A673 (cell line): ENCODE measurements at regions of chr7 and their contacts with region 1.

Region 1: DNA sequence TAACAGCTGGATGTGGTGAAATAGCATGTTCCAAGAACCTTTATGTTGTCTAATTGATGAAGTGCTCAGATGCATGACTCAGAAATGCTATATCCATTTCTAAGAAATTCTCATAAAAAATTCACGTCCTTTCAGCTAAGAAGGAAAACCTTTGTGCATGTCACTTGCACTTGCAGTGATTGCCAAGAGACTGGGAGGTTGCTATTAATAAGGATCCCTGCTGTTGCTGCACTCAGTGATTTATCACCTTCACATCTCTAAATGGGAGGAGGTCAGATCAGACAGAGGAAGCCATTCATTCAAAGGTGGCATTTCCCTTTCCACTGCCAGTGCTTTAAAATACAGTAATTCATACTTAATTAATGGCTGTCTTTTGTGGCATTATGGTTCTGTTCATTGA is 89.5 kb downstream of the THSD7A start:
- DNase-seq: peak; percentile 90
- H3K4me3 ChIP-seq: no peak overlapping the region
- H3K27ac ChIP-seq: no peak overlapping the region
- H3K4me1 ChIP-seq: peaks cover 14% of the 10 kb centered on the region
- H3K27me3 ChIP-seq: no peaks in the 10 kb centered on the region
- CTCF ChIP-seq: no peak

Region 2: DNA sequence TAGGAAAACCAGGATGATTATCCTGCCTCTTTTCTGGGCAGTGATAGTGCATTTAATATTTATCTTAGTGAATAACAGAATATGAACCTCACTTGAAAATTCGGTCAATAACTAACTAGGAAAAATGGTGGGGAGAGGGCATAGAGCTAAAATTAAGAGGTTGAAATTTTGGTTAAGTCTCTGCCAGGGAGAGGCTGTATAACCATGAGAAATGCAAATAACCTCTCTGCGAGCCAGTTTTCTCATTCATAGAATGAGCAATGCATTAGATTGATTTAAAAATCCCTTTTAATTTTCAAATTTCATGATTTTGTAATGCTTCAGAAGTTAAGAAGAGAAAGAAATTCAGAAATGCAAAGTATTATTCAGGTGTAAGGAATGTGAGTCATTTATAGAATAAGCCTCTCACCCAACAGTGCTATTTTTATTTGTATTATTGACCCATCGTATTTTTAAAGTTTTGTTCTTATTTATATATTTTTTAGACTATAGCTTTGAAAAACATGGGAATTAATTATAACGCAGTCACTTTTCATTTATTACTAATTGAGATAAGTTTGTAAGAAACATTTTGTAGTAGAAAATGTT is 664.2 kb before region 1 on chr7:
- CTCF ChIA-PET with region 1: no interaction called
- POLR2A ChIA-PET with region 1: no interaction called
- intact Hi-C with region 1: no loop called
- DNase-seq: no peak
- H3K4me3 ChIP-seq: no peak overlapping the region
- H3K27ac ChIP-seq: no peak overlapping the region
- H3K4me1 ChIP-seq: no peaks in the 10 kb centered on the region
- H3K27me3 ChIP-seq: no peaks in the 10 kb centered on the region
- CTCF ChIP-seq: no peak

Region 3: DNA sequence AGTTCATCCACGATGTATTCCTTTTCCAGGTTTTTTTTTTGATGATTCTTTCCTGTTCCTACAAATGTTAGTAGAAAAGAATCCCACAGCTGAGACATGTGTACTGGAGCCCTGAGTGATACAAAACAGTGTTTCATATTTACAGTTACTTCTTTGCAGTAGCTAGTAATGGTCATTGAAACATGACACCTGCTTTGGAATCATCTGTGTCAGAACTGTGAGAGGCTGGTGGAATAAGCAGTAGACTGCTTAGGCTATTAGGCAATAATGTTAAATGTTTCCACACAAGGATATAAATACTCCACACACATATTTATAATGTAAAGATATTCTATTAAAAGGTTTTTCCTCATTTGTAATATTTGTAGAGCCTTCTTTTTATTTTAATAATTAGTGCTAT is 304.5 kb before region 1 on chr7:
- CTCF ChIA-PET with region 1: no interaction called
- POLR2A ChIA-PET with region 1: no interaction called
- intact Hi-C with region 1: loop called (anchors 10 kb)
- DNase-seq: peak; percentile 29
- H3K4me3 ChIP-seq: no peak overlapping the region
- H3K27ac ChIP-seq: no peak overlapping the region
- H3K4me1 ChIP-seq: no peaks in the 10 kb centered on the region
- H3K27me3 ChIP-seq: no peaks in the 10 kb centered on the region
- CTCF ChIP-seq: no peak